Head of caudate nucleus (tissue), 42 donors: ENCODE measurements at regions of chr3 and their contacts with region 1.

Region 1: GRCh38 chr3:168467115-168467714 is 371.5 kb upstream of the GOLIM4 start:
- DNase-seq: peak in 26 of 42 donors; percentile 6 to 79 (median 42)

Region 2: DNA sequence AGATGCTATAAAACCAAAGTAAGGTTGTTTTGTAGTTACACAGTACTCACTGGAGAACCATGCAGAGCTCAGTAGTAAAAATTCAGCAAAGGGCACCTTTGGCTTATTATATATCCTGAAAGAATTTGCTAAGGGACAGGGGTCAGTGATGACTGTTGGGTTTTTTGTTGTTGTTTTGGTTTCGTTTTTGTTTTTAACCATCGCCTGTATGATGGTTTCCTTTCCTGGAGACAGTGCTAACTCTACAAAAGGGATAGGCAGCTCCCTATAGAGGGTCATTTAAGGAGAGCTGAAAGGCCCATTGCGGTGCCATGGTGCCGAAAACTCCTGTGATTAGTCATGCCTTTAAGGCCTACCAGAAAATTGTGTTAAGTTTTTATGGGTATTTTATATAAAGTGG is 253.3 kb before region 1 on chr3:
- intact Hi-C with region 1: loop called (anchors 10 kb)
- DNase-seq: no peak